GM10248 (cell line): ENCODE measurements at regions of chr21 and their contacts with region 1.

Region 1: GRCh38 chr21:29271927-29272333 is 26.8 kb upstream of the BACH1 start:
- DNase-seq: no peak
- CTCF ChIP-seq: no peak

Region 2: DNA sequence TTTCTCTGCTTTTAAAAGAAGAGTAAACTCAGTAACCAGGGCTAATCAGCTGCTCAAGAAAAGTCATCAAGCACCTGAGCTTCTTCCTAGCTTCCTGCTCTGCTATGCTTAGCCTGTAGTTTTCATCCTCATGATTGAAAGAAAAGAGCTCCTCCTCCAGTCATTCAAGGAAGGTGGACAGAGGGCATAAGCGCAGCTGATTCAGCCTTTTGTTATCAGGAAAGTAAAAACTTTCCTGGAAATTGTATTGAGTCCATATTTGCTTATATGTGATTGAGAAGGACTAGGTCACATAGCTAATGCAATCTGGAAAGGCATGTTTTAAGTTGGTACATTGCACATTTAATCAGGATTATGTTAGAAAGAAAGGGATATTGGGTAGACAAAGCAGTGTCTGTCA is 18.3 kb after region 1 on chr21:
- CTCF ChIA-PET with region 1: interaction called, 14 read pairs
- POLR2A ChIA-PET with region 1: no interaction called
- DNase-seq: no peak
- CTCF ChIP-seq: no peak

Region 3: GRCh38 chr21:29306920-29307319 is 35.0 kb after region 1 on chr21:
- CTCF ChIA-PET with region 1: no interaction called
- POLR2A ChIA-PET with region 1: no interaction called
- DNase-seq: no peak
- CTCF ChIP-seq: no peak

Region 4: DNA sequence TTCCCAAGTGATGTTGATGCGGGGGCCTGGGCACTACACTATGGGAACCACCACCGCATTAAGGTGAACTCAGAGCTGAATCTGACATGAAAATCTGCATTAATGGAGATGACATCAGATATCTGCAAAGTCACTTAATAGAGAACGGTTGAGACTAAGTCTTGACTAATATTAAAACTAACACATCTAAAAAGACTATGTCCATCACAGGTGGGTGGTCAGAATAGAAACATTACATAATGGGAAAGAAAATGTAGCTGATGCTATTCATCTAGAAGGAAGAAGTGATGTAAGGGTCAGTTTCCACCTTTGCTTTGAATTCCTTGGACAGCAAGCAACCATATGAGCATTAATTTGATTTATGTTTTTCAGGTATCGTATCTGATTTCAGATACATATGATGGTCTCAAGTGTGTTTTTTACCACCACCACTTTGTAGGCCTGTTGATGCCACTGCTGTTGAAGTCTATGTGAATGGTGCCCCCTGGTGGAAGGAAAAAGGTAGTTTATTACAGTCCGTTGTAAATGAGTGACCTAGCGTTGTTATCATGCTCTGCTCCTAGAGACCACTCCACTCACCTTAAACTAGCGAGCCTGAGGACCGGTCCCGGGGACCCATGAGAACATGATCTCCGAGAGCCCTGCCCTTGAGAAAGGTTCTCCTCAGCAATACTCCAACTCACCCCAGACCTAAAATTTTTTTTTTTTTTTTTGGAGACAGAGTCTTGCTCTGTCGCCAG is 100.3 kb after region 1 on chr21:
- CTCF ChIA-PET with region 1: no interaction called
- POLR2A ChIA-PET with region 1: no interaction called
- DNase-seq: peak; percentile 68
- CTCF ChIP-seq: peak; percentile 57